Panc1 (cell line): ENCODE measurements at regions of chr12 and their contacts with region 1.

Region 1: DNA sequence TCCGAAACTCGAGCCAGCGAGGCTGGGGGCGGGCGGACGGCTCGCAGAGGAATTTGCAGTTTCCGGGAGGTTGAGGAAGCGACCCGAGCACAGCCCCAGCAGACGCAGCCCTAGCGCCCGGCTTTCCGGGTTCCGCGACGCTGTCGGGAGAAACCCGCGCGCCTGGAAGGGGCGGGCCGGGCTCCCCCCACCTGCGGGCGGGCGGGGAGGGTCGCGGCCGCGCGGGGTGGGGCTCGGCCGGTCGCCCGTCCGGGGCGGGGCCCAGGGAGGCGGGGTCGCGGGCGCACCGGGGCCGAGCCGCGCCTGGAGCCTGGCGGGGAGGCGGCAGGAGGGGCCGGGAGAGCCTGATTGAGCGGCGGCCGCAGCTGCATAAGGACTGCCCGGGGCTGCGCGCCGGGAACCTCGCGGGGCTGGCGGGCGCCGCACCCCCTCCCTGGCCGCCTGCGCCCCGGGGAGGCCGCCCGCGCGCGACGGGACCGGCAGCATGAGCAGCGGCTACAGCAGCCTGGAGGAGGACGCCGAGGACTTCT is at the start of gene RASSF3:
- DNase-seq: no peak
- ATAC-seq: peak; percentile 86
- H3K4me3 ChIP-seq: peak within 1 kb of the TSS; percentile 70 to 95
- H3K27ac ChIP-seq: peak within 1 kb of the TSS; percentile 97
- H3K4me1 ChIP-seq: peaks cover 25% of the 10 kb centered on the region
- H3K27me3 ChIP-seq: no peaks in the 10 kb centered on the region
- CTCF ChIP-seq: no peak
- total RNA-seq, gene RASSF3: 107 TPM

Region 2: GRCh38 chr12:64534672-64535199 is 75.5 kb before region 1 on chr12:
- CTCF ChIA-PET with region 1: interaction called, 12 read pairs
- POLR2A ChIA-PET with region 1: no interaction called
- in situ Hi-C with region 1: no loop called
- intact Hi-C with region 1: no loop called
- DNase-seq: no peak
- ATAC-seq: no peak
- H3K4me3 ChIP-seq: no peak overlapping the region
- H3K27ac ChIP-seq: no peak overlapping the region
- H3K4me1 ChIP-seq: no peaks in the 10 kb centered on the region
- H3K27me3 ChIP-seq: no peaks in the 10 kb centered on the region
- CTCF ChIP-seq: no peak

Region 3: GRCh38 chr12:64550755-64551154 is 59.5 kb before region 1 on chr12:
- CTCF ChIA-PET with region 1: interaction called, 18 read pairs
- POLR2A ChIA-PET with region 1: no interaction called
- in situ Hi-C with region 1: no loop called
- intact Hi-C with region 1: loop called (anchors 1 kb)
- DNase-seq: no peak
- ATAC-seq: no peak
- H3K4me3 ChIP-seq: no peak overlapping the region
- H3K27ac ChIP-seq: no peak overlapping the region
- H3K4me1 ChIP-seq: no peaks in the 10 kb centered on the region
- H3K27me3 ChIP-seq: no peaks in the 10 kb centered on the region
- CTCF ChIP-seq: no peak

Region 4: DNA sequence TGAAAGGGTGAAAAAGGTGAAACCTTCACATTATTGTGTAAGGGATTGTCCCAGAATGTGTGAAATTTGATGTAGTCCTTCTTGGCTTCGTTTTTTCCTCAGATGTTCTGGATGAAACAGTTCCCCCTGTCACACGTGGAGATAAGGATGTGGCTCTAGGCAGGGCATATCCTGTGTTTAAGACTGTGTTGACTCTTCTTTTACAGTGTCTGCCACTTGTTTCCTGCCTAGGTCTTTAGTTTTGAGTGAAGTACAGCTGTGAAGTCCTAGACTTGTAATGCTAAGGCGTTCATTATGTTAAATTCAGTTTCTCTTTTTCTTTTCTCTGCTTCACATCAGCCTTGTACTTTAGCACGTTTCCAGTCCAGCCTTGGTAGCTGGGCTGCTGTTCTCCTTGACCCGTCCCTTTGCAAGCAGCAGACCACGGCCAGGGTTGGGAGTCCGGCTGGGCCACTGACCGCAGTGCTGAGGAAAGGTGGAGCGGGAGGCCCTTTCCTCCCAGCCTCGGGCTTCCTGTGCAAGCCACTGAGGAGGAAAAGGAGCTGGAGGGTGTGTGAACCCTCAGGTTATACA is 59.1 kb after region 1 on chr12:
- CTCF ChIA-PET with region 1: no interaction called
- POLR2A ChIA-PET with region 1: no interaction called
- in situ Hi-C with region 1: no loop called
- intact Hi-C with region 1: loop called (anchors 2 kb)
- DNase-seq: no peak
- ATAC-seq: peak; percentile 62
- H3K4me3 ChIP-seq: peak overlapping the region in 1 of 2 experiments; percentile 29; a peak in 2 of 4 replicates
- H3K27ac ChIP-seq: peak overlapping the region; percentile 98
- H3K4me1 ChIP-seq: peaks cover 98% of the 10 kb centered on the region
- H3K27me3 ChIP-seq: no peaks in the 10 kb centered on the region
- CTCF ChIP-seq: no peak

Region 5: DNA sequence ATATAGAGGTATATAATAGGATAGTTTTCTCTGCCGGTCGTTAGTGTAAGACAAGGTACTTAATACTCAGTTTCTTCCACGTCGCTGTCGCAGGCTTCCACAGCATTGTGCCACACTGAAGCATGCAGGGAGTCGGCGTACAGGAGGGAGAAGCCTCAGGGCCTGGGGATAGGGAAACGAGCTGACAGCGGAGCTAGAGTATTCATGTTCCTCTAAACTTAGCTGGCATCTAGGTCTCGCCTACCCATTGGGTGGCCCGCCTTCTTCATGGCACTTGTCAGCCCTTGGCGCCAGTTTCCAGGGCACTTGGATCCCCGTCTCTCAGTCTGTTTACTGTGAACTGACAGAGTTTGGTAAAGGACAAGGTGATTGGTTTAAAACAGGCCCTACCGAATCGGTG is 75.4 kb after region 1 on chr12:
- CTCF ChIA-PET with region 1: interaction called, 10 read pairs
- POLR2A ChIA-PET with region 1: no interaction called
- in situ Hi-C with region 1: no loop called
- intact Hi-C with region 1: no loop called
- DNase-seq: no peak
- ATAC-seq: no peak
- H3K4me3 ChIP-seq: no peak overlapping the region
- H3K27ac ChIP-seq: no peak overlapping the region
- H3K4me1 ChIP-seq: peaks cover 31% of the 10 kb centered on the region
- H3K27me3 ChIP-seq: no peaks in the 10 kb centered on the region
- CTCF ChIP-seq: no peak

Region 6: GRCh38 chr12:64696080-64696741 is 86.0 kb after region 1 on chr12:
- CTCF ChIA-PET with region 1: interaction called, 15 read pairs
- POLR2A ChIA-PET with region 1: no interaction called
- in situ Hi-C with region 1: no loop called
- intact Hi-C with region 1: loop called (anchors 5 kb)
- DNase-seq: no peak
- ATAC-seq: 0 out of 2 replicates have a peak, but pooled peaks have one; percentile 31
- H3K4me3 ChIP-seq: no peak overlapping the region
- H3K27ac ChIP-seq: peak overlapping the region; percentile 46; the same call in 1 of the 2 replicates
- H3K4me1 ChIP-seq: peaks cover 32% of the 10 kb centered on the region
- H3K27me3 ChIP-seq: no peaks in the 10 kb centered on the region
- CTCF ChIP-seq: peak; percentile 47; the same call in 1 of the 2 replicates

Region 7: DNA sequence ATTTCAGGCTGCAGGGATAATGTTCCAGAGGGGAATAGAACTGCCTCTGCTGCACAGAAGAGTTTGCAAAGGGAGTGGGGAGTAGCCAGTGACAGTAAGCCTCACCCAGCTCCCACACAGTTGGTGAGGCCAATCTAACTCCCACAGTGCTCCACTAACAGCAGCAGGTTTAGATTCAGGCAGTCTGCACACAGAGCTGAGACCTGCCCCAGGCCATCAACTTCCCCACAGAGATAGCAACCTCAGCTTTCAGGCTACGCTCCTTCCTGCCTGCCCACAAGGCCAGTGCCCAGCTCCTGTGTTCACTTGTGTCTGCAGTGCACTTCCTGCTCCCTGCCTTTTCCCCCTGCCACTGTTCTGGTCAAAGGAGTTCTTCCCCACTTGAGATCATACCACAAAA is 321.8 kb after region 1 on chr12:
- CTCF ChIA-PET with region 1: no interaction called
- POLR2A ChIA-PET with region 1: no interaction called
- in situ Hi-C with region 1: no loop called
- intact Hi-C with region 1: no loop called
- DNase-seq: no peak
- ATAC-seq: no peak
- H3K4me3 ChIP-seq: no peak overlapping the region
- H3K27ac ChIP-seq: no peak overlapping the region
- H3K4me1 ChIP-seq: no peaks in the 10 kb centered on the region
- H3K27me3 ChIP-seq: no peaks in the 10 kb centered on the region; the same call in none of the 2 replicates
- CTCF ChIP-seq: no peak

Region 8: DNA sequence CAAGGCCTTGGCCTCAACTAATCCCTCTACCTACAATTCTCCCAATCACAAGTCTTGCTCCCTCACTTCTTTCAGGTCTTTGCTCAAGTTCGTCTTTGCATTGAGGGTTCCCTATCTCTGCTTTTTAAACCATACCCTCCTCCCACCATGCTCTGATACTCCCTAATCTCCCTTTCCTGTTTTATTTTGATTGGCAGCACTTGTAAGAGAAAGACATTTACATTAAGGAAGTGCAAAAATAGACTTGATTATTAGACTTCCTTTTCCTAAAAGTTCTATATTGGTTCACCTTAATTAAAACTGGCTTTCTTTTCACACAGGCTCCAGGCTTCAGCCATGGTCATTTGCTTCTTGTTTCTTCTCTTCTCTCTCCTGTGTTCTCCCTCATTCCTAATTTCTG is 529.2 kb after region 1 on chr12:
- CTCF ChIA-PET with region 1: no interaction called
- POLR2A ChIA-PET with region 1: no interaction called
- in situ Hi-C with region 1: no loop called
- intact Hi-C with region 1: no loop called
- DNase-seq: no peak
- ATAC-seq: no peak
- H3K4me3 ChIP-seq: no peak overlapping the region
- H3K27ac ChIP-seq: no peak overlapping the region
- H3K4me1 ChIP-seq: no peaks in the 10 kb centered on the region
- H3K27me3 ChIP-seq: peaks cover 18% of the 10 kb centered on the region
- CTCF ChIP-seq: no peak